Dorsolateral prefrontal cortex (tissue), 120 donors: ENCODE measurements at regions of chr4 and their contacts with region 1.

Region 1: DNA sequence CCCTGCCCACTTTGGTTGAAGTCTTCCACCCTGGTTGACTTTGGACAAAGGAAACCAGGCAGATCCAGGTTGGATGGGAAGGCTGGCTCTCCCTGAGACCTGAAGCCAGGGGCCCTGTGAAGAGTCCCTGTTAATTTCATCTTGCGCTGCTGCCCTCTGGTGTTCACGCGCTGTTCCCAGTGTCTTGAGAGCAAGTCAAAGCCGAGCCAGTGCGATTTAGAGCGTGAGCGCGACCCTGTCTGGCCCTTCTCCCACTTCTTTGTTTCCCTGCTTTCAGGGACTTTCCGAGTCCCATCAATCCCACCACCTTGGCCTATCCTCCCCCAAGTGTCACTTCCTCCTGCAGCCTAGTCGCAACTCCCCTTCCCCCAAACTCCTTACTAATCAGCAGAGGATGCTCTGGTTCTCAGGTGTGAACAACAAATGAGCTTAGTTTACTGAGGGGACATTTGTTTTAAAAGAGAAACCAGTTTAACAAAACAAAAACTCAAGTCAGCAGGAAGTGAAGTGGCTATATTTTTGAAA is 25.8 kb upstream of the CHRNA9 start:
- DNase-seq: peak; percentile 76 to 95 (median 86)
- H3K4me3 ChIP-seq: peak overlapping the region in 18 of 59 donors; percentile 2 to 35 (median 22)
- H3K27ac ChIP-seq: no peak overlapping the region
- H3K27me3 ChIP-seq: peaks cover 0 to 9% (median 0%) of the 10 kb centered on the region in 45 donors
- CTCF ChIP-seq: peak; percentile 64 to 93 (median 88)

Region 2: DNA sequence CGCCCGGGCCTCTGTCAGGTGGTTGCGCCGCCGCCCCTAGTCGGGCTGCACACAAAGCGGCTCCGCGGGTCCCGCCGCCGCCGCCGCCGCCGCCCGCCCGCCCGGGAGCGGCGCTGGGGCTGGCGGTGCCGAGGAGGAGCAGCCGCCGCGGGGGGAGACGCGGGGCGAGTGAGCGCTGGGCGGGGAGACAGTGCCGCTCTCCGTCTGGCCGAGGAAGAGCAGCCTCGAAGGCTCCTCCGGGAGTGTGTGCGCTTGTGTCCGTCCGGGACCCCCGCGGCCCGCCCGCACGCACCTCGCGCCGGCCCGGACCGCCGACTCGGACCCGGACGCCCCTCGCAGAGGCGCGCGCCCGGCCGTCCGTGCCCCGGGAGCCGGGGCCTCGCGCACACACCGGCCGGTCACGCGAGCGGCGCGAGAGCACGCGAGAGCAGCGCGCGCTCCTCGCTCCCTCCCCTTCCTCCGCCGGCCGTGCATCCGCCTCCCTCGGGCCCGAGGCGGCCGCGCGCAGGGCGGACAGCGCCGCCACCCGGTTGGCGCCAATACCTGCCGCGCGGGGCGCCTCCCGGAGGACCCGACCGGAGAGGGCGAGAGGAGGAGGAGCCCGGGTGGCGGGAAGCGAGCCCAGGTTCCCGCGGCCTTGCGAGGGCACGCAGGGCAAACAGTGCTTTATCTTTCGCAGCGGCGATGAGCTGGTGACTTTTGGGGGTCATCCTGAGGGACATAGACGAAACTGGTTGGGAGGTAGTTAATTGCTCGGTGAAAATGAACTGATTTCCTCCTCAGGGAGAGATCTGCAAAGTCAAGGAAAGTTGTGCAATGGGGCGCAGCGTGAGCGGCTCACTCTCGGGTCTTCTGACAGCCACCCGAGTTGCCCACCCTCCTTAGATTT is 331.6 kb before region 1 on chr4 and contains the start of gene PDS5A:
- intact Hi-C with region 1: loop called in 1 of 2 experiments (anchors 5 kb)
- DNase-seq: peak; percentile 67 to 89 (median 81)
- H3K4me3 ChIP-seq: peak within 1 kb of the TSS; percentile 62 to 98 (median 93)
- H3K27ac ChIP-seq: peak within 1 kb of the TSS; percentile 84 to 98 (median 95)
- H3K27me3 ChIP-seq: no peaks in the 10 kb centered on the region
- CTCF ChIP-seq: peak; percentile 54 to 93 (median 80)
- total RNA-seq, gene PDS5A: 43.7 to 92.5 (median 61.9) TPM

Region 3: DNA sequence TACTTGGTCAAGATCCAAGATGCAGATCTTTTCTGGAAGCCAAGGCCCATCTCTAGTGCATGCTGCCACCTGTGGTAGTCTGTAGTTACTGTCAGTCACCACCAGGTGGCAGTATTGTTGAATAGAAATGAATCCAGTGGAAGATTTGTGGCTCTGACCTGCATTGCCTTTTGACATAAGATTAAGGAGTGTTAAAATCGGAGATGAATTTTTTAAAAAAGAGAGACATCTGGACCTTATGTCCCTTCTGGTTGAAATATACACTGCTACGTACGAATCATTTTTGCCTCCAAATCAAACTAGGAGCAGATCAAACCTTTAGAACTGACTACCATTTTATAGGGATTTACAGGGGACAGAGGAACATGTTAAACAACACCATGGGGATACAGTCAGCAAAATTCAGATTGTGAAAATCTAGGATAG is 159.3 kb before region 1 on chr4:
- intact Hi-C with region 1: loop called in 1 of 2 experiments (anchors 2 kb)
- DNase-seq: peak in 3 of 10 donors; percentile 9 to 51 (median 36)
- H3K4me3 ChIP-seq: no peak overlapping the region
- H3K27ac ChIP-seq: no peak overlapping the region
- H3K27me3 ChIP-seq: no peaks in the 10 kb centered on the region
- CTCF ChIP-seq: peak; percentile 60 to 91 (median 80)